MCF 10A (cell line): ENCODE measurements at regions of chr14 and their contacts with region 1.

Region 1: DNA sequence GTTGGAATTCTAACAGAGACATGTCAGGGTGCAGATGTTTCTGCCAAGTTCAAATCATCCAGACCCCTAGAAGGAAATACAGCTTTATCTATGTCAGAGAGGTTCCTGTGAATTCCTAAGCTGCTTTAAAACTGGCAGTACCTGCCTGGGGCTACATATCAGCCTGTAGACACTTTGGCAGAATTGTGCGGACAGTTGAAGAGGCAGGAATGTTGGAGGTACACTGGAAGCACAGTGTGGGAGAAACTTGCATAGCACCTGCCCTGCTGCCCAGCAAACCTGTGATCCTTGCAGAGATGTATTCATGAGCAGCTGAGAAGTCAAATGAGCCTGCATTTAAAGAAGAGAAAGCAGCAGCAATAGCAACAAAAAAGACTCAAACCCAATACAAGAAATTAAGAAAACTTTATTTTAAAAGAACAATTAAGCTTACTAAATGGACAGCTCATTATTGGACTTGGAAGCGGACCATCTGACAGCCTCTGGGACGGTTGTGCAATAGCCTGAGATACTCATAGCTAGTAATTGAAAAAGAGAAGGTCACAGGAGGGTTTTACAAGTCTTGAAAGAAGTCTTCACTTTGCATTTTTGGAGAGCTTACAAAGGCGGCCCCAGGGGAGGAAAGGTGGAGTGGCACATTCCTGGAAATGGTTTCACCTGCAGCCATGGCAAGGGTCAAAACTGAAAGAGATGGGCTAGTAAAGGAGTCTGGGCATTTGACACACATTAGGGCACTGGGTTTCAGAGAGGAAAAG is 280.9 kb upstream of the FLRT2 start:
- DNase-seq: peak; percentile 78
- H3K4me3 Mint-ChIP-seq: peak overlapping the region; percentile 49
- H3K27ac Mint-ChIP-seq: no peak overlapping the region
- H3K4me1 Mint-ChIP-seq: peaks cover 34% of the 10 kb centered on the region
- H3K27me3 Mint-ChIP-seq: no peaks in the 10 kb centered on the region
- CTCF ChIP-seq: no peak

Region 2: DNA sequence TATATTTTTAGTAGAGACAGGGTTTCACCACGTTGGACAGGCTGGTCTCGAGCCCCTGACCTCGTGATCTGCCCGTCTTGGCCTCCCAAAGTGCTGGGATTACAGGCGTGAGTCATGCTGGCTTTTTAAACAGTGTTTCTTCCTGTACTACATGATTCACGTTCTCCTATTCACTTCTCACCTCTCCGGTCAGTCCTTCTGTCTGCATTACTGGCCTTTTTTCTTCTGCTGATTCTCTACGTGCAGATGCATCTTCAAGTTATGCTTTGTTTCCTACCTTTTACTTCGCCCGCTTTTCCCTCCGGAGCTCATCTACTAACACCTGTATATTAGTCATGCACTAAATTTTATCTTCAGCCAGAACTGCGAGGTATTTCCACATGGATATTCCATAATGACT is 15.3 kb before region 1 on chr14:
- CTCF ChIA-PET with region 1: interaction called, 11 read pairs
- POLR2A ChIA-PET with region 1: interaction called, 13 read pairs
- intact Hi-C with region 1: no loop called
- DNase-seq: peak; percentile 79
- H3K4me3 Mint-ChIP-seq: peak overlapping the region; percentile 71
- H3K27ac Mint-ChIP-seq: peak overlapping the region; percentile 75
- H3K4me1 Mint-ChIP-seq: peaks cover 23% of the 10 kb centered on the region
- H3K27me3 Mint-ChIP-seq: no peaks in the 10 kb centered on the region
- CTCF ChIP-seq: no peak